ENCODE measurements at regions of chr18 and their contacts with region 1.

Region 1: DNA sequence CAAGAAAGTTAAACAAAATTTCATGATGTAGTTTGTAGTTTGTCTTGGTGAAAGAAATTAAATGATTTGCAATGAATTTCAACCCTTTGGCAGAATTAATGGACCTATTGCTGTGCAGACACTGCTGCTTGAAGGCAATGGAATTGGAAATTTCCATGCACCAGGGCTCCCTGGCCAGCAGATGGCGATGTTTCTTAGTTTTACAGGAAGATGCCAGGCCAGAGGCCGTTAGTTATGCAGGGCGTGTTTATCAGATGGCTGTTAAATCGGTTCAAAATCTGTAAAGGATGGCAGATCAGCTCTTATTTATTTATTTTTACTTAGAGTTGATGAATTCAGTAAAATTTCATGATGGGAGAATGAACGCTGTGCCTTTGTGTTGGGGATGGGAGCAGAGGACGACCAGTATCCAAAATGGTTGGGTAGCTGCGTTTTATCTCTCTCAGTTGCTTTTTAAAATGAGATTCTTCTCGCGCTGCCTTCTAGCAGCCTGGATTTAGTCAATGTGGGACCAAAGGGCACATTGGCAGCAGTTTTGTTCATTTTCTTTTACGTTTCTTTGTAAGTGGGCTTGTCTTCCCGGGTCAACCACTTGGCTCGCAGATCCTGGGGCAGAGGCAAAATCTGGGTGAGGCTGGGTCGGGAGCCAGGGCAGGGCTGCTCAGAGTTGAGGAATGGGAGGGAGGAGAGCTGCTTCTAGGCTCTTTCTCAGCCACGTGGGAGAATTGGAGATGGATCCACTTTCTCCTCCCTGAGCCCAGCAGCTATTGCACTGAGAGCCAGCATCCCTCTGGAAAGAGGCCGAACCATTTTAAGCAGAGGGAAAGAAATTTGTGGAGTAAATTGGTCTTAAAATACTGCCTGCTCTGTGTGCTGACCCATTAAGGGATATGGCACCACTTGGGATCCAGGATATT is 344.0 kb downstream of the PIK3C3 start:
- DNase-seq: peak; percentile 3 to 57 (median 36)
- ATAC-seq: no peak
- H3K4me3 ChIP-seq: no peak overlapping the region
- H3K4me3 Mint-ChIP-seq: no peak overlapping the region
- H3K27ac ChIP-seq: no peak overlapping the region
- H3K27ac Mint-ChIP-seq: no peak overlapping the region
- H3K4me1 ChIP-seq: no peaks in the 10 kb centered on the region
- H3K4me1 Mint-ChIP-seq: peaks cover 2% of the 10 kb centered on the region
- H3K27me3 ChIP-seq: no peaks in the 10 kb centered on the region
- H3K27me3 Mint-ChIP-seq: peaks cover 6% of the 10 kb centered on the region
- CTCF ChIP-seq: peak; percentile 86

Region 2: DNA sequence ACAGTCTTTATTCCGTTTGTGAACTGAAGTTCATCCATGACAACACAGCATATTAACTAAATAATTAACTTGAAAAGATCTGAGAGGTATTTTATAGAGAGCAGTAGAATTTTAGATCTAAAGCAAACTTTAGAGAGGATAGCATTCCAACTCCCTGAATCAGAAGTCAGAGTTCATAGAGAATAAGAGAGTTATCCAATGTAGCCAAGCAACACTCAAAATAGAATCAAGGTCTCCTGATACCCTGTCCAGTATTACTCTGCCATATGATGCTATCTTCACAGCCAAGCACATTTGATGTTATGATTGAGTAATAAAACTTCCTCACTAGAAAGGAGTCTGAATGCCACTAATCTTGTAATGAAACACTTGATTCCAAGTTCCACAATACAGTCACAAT is 761.0 kb after region 1 on chr18:
- CTCF ChIA-PET with region 1: no interaction called
- POLR2A ChIA-PET with region 1: no interaction called
- intact Hi-C with region 1: no loop called
- DNase-seq: no peak
- ATAC-seq: no peak
- H3K4me3 ChIP-seq: no peak overlapping the region
- H3K4me3 Mint-ChIP-seq: no peak overlapping the region
- H3K27ac ChIP-seq: no peak overlapping the region
- H3K27ac Mint-ChIP-seq: no peak overlapping the region
- H3K4me1 ChIP-seq: no peaks in the 10 kb centered on the region
- H3K4me1 Mint-ChIP-seq: no peaks in the 10 kb centered on the region
- H3K27me3 ChIP-seq: no peaks in the 10 kb centered on the region
- H3K27me3 Mint-ChIP-seq: no peaks in the 10 kb centered on the region
- CTCF ChIP-seq: no peak

Region 3: GRCh38 chr18:43271593-43272432 is 972.8 kb after region 1 on chr18:
- CTCF ChIA-PET with region 1: no interaction called
- POLR2A ChIA-PET with region 1: no interaction called
- intact Hi-C with region 1: loop called in 1 of 2 experiments (anchors 5 kb)
- DNase-seq: peak in 2 of 9 experiments; percentile 29 to 30
- ATAC-seq: no peak
- H3K4me3 ChIP-seq: no peak overlapping the region
- H3K4me3 Mint-ChIP-seq: no peak overlapping the region
- H3K27ac ChIP-seq: no peak overlapping the region
- H3K27ac Mint-ChIP-seq: no peak overlapping the region
- H3K4me1 ChIP-seq: no peaks in the 10 kb centered on the region
- H3K4me1 Mint-ChIP-seq: no peaks in the 10 kb centered on the region
- H3K27me3 ChIP-seq: no peaks in the 10 kb centered on the region
- H3K27me3 Mint-ChIP-seq: no peaks in the 10 kb centered on the region
- CTCF ChIP-seq: peak; percentile 73

Region 4: GRCh38 chr18:43596105-43596712 is 1297.2 kb after region 1 on chr18:
- CTCF ChIA-PET with region 1: no interaction called
- POLR2A ChIA-PET with region 1: no interaction called
- intact Hi-C with region 1: loop called in 1 of 2 experiments (anchors 10 kb)
- DNase-seq: no peak
- ATAC-seq: no peak
- H3K4me3 ChIP-seq: no peak overlapping the region
- H3K4me3 Mint-ChIP-seq: no peak overlapping the region
- H3K27ac ChIP-seq: no peak overlapping the region
- H3K27ac Mint-ChIP-seq: no peak overlapping the region
- H3K4me1 ChIP-seq: no peaks in the 10 kb centered on the region
- H3K4me1 Mint-ChIP-seq: no peaks in the 10 kb centered on the region
- H3K27me3 ChIP-seq: no peaks in the 10 kb centered on the region
- H3K27me3 Mint-ChIP-seq: no peaks in the 10 kb centered on the region
- CTCF ChIP-seq: no peak